ENCODE measurements at regions of chr10 and their contacts with region 1.

Region 1: DNA sequence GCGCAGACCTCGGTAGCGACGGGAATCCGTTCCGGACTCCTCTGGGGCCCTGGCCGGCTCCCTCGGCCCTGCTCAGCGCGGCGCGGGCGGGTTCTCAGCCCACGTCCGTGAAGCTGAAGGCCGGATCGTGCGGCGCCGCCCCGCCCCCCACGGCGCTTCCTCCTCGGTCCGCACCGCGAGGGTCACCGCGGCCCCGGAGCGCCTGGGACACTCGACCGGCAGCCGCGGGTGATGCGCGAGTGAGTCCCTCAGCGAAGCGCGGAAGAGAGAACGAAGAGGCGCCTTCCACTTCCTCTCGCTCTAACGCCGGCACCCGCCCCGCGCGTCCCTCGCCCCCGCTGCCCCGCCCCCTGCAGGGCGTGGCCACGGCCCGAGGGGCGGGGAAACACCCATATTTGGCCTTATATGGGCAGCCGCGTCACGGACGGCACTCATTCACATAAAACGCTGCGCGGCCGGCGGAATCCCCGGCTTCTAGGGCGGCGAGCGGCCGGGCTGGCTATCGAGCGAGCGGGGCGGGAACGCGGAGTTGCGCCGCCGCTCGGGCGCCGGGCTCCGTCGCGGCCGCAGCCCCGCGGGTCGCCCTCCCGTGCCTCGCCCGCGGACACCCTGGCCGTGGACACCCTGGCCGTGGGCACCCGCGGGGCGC is at the start of gene DUSP5:
- DNase-seq: peak; percentile 99
- H3K4me3 ChIP-seq: peak within 1 kb of the TSS; percentile 68 to 83 (median 78)
- H3K27ac ChIP-seq: peak within 1 kb of the TSS; percentile 88 to 93 (median 92)
- H3K4me1 ChIP-seq: peaks cover 49 to 62% (median 60%) of the 10 kb centered on the region in 4 donors
- H3K27me3 ChIP-seq: no peaks in the 10 kb centered on the region
- CTCF ChIP-seq: no peak
- EP300 ChIP-seq: no peak
- POLR2A ChIP-seq: peak; percentile 80
- total RNA-seq, gene DUSP5: 3.8 to 25.7 (median 4.6) TPM

Region 2: DNA sequence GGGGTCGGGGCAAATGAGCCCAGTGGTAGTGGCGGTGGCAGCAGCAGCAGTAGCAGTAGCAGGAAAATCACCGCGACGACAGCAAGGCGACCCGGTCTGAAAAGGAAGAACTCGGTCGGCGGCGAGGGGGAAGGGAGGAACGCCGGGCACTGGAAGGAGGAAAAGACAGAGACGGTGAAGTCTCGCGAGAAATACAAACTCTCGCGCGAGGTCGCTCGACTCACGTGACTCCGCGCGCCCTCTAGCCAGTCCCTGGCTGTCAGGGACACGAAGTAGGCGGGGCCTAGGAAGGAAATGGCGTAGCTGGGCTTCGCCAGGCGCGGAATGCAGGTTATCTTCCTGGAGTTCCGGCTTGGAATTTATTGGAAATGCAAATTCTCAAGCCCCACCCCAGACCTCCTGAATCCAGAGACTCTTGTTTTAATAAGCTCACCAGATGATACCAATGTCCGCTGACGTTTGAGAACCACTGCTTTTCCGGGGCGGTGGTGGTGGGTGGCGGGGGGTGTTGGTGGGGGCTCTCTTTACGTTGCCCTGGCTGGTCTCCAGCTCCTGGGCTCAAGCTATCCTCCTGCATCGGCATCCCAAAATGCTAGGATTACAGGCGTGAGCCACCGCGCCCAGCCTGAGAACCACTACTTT is 192.7 kb before region 1 on chr10 and contains the start of gene SMNDC1:
- intact Hi-C with region 1: loop called (anchors 5 kb)
- DNase-seq: peak; percentile 99
- H3K4me3 ChIP-seq: peak within 1 kb of the TSS; percentile 76 to 93 (median 91)
- H3K27ac ChIP-seq: peak within 1 kb of the TSS; percentile 93 to 98 (median 96)
- H3K4me1 ChIP-seq: peaks cover 39 to 52% (median 51%) of the 10 kb centered on the region in 4 donors
- H3K27me3 ChIP-seq: no peaks in the 10 kb centered on the region
- CTCF ChIP-seq: no peak
- EP300 ChIP-seq: no peak
- POLR2A ChIP-seq: peak; percentile 46
- total RNA-seq, gene SMNDC1: 9.7 to 17.0 (median 13.1) TPM

Region 3: GRCh38 chr10:110356628-110357245 is 140.8 kb before region 1 on chr10:
- intact Hi-C with region 1: loop called (anchors 5 kb)
- DNase-seq: no peak
- H3K4me3 ChIP-seq: peak overlapping the region in 3 of 4 donors; percentile 13 to 20 (median 17)
- H3K27ac ChIP-seq: peak overlapping the region in 2 of 4 donors; percentile 27 to 52
- H3K4me1 ChIP-seq: peaks cover 16 to 49% (median 44%) of the 10 kb centered on the region in 4 donors
- H3K27me3 ChIP-seq: no peaks in the 10 kb centered on the region
- CTCF ChIP-seq: no peak
- EP300 ChIP-seq: no peak
- POLR2A ChIP-seq: no peak

Region 4: DNA sequence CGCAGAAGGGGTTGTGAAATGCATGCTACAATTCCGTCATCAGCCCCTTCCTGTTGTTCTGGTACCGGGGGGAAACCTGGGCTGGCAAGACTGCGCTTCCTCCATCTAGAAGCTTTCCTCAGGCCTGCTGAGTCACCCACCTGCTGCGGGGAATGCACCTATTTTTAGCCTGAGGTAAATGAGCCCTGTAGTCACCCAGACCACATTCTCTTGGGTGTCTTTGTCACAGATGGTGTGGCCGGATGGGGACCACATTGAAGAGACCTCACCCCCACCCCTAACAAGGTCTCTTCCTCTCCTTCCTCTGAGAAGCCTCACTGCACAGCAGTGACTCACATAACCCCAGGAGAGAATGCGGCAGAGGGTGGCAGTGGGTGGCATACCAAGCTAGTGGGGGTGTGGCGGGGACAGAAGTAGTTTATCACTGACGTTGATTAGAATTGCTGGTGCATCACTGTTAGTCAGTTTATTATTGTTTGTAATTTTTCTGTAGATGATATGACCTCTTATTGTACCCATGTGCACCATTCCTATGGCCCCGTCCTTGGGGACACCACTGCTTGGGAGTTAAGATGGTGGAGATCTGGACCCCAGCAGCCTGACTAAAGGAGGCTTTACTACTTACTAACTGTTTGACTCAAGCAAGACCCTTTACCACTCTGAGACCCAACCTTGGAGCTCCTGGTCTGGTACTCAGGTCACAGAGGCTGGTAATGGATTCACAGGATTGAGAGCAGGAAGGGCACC is 82.8 kb before region 1 on chr10:
- intact Hi-C with region 1: loop called (anchors 5 kb)
- DNase-seq: no peak
- H3K4me3 ChIP-seq: no peak overlapping the region
- H3K27ac ChIP-seq: no peak overlapping the region
- H3K4me1 ChIP-seq: peaks cover 17 to 22% (median 19%) of the 10 kb centered on the region in 4 donors
- H3K27me3 ChIP-seq: no peaks in the 10 kb centered on the region
- CTCF ChIP-seq: no peak
- EP300 ChIP-seq: no peak
- POLR2A ChIP-seq: no peak

Region 5: GRCh38 chr10:110535958-110536891 is 38.7 kb after region 1 on chr10:
- intact Hi-C with region 1: no loop called
- DNase-seq: peak; percentile 86
- H3K4me3 ChIP-seq: no peak overlapping the region
- H3K27ac ChIP-seq: no peak overlapping the region
- H3K4me1 ChIP-seq: peaks cover 0 to 5% (median 2%) of the 10 kb centered on the region in 4 donors
- H3K27me3 ChIP-seq: peaks cover 0 to 29% (median 0%) of the 10 kb centered on the region in 4 donors
- CTCF ChIP-seq: peak; percentile 27 to 52 (median 43)
- EP300 ChIP-seq: no peak
- POLR2A ChIP-seq: no peak

Region 6: DNA sequence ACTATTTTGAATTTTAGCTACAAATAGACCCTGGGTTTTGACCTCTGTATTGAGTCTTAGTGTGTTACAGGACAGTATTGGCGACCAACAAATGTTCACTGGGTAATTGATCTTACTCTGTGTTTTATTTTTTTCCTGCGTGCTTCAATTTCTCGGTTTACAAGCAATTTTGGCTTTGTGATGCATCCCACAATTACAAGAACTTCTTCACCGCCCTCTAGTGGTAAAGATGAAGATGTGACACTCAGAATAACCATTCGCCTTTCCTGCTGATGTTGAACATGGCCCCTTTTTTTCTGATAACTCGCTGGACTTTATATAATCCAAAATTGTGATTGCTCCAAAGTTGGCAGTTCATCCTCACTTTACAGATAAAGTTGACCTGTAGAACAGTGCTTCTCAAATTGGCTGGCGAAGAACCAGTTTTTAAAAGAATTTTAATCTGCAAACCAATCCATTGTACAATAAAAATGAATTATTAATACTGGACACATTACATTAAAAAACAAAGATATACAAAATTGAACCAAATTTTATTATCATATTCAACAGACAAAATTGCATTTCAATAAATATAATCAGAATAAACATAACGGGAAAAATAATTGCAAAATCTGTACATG is 49.7 kb after region 1 on chr10:
- intact Hi-C with region 1: loop called (anchors 5 kb)
- DNase-seq: peak; percentile 14
- H3K4me3 ChIP-seq: no peak overlapping the region
- H3K27ac ChIP-seq: no peak overlapping the region
- H3K4me1 ChIP-seq: peaks cover 0 to 5% (median 0%) of the 10 kb centered on the region in 4 donors
- H3K27me3 ChIP-seq: peaks cover 0 to 2% (median 0%) of the 10 kb centered on the region in 4 donors
- CTCF ChIP-seq: peak; percentile 76 to 82 (median 76)
- EP300 ChIP-seq: no peak
- POLR2A ChIP-seq: no peak

Measured in esophagus muscularis mucosa (tissue), 4 donors.